Right ventricle myocardium superior (tissue), 1 donor: ENCODE measurements at regions of chr9 and their contacts with region 1.

Region 1: GRCh38 chr9:127715394-127716337 is at the starts of genes PTRH1 and TTC16:
- DNase-seq: peak; percentile 98
- ATAC-seq: peak; percentile 98
- total RNA-seq, gene PTRH1: 13.3 TPM
- total RNA-seq, gene TTC16: 0.48 TPM

Region 2: DNA sequence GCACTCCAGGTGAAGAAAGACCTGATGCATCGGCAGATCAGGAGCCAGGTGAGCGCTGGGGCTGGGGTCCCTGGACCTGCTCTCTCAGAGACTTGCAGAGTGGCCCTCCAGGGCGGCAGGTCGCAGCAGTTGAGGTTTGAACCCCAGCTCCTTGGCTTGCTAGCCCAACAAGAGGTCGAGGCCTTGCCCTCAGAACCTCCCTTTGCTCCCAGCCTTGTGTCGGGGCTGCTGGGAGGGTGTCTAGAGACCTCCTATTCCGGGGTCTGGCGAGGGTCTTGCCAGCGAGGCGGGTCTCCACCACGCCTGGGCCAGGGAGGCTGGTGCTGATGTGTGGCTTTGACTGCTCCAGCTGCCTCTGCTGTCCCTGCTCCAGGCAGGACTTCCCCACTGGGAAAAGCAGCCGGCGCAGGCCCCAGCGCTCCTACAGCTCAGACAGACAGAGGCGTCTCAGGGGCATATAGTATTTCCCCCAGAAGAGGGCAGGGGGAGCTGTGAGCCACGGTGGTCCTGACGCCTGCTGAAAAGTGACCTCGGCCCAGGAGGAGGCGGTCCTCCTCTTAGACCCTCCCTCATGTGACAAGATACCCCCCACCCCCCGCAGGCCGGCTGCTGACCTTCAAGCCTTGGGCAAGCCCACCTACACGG is 226.1 kb before region 1 on chr9:
- intact Hi-C with region 1: loop called (anchors 10 kb)
- DNase-seq: no peak
- ATAC-seq: no peak

Region 3: DNA sequence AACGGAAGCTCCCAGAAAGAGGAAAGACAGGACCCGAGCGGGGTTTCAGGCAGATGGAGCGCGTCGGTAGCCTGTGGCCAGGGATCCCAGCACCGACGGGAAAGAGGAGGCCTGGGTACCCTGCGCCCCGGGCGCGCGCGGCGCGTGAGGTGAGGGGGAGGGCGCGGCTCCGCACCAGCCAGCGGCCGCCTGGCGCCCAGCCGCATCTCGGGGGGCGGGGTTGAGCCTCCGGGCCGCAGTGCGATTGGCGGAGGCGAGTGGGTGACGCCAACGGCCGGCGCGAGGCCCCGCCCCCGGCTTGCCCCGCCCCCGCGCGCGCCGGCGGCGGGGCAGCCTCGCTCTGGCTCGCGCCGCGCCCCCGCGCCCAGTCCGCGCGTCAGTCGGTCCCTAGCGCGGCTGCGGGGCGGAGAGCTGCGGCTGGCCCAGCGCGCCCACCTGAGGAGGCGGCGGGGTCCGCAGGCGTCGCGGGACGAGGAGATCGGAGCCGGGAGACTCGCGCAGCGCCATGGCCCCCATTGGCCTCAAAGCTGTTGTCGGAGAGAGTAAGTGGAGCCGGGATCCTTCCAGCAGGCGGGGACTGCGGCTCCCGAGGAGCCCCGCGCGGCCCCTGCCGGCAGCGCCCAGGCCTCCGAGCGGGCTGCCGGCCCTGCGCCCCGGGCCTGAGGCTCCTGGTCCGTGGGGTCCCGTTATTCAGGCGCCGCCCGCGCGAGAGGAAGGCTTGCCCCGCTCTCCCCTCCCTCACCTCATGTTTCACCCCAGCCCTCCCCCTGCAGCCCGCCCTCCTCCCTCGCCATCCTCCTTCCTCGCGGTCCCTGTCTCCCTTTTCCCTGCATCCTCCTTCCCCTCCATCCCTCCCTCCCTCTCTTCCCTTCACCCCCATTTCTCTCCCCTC is 103.5 kb before region 1 on chr9 and contains the start of gene STXBP1:
- intact Hi-C with region 1: loop called (anchors 5 kb)
- DNase-seq: peak; percentile 93
- ATAC-seq: peak; percentile 84
- total RNA-seq, gene STXBP1: 50.9 TPM